Right ventricle myocardium inferior (tissue), 1 donor: ENCODE measurements at regions of chr2 and their contacts with region 1.

Region 1: GRCh38 chr2:182426082-182426917 is 536 bp downstream of the PDE1A start:
- DNase-seq: no peak
- ATAC-seq: peak; percentile 72

Region 2: DNA sequence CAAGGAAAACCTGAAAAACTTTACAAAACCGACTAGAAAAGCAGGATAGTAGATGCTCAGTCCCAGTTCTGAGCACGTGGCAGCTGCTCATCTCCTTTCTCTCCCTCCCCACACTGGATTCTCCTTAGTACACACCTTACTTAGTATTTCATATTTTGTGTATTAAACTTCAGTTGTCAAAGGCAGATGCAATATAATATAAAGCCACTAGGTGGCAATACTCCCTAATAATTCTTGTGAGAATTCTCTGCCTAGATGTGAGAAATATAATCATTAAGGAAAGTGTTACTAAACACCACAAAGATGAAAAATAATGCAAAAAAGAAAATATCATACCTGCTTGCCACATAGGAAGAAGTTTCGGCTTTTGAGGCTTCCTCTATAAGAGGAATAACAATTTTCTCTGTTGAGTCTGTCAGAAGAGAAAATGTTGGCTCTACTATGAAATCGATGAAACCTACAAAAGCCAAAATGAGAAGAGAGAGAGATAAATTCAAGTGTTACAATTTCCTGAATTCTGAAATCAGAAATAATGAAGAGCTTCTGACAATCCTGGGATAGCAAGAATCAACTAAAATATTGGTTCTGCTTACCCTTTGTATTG is 240.1 kb before region 1 on chr2:
- intact Hi-C with region 1: loop called (anchors 5 kb)
- DNase-seq: no peak
- ATAC-seq: peak; percentile 55

Region 3: GRCh38 chr2:182240862-182241371 is 185.4 kb before region 1 on chr2:
- intact Hi-C with region 1: loop called (anchors 5 kb)
- DNase-seq: no peak
- ATAC-seq: peak; percentile 59

Region 4: GRCh38 chr2:182372661-182373060 is 53.6 kb before region 1 on chr2:
- intact Hi-C with region 1: loop called (anchors 2 kb)
- DNase-seq: no peak
- ATAC-seq: peak; percentile 93

Region 5: DNA sequence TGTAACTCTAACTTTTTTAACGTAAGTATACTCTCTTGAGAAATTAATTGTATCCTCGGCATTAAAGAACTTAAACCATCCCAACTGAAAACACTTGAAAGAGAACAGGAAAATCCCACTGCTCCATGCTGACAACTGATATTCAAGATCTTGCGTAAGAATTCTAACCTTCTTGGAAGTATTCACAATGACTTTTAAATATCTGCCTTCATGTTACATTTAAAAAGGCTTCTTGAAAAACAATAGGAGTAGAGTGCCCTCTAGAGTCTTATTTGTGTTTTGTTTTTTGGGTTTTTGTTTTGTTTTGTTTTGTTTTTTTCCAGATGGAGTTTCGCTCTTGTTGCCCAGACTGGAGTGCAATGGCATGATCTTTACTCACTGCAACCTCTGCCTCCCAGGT is 224.4 kb after region 1 on chr2:
- intact Hi-C with region 1: loop called (anchors 5 kb)
- DNase-seq: no peak
- ATAC-seq: peak; percentile 71